Right lobe of liver (tissue), 6 donors: ENCODE measurements at regions of chr11 and their contacts with region 1.

Region 1: DNA sequence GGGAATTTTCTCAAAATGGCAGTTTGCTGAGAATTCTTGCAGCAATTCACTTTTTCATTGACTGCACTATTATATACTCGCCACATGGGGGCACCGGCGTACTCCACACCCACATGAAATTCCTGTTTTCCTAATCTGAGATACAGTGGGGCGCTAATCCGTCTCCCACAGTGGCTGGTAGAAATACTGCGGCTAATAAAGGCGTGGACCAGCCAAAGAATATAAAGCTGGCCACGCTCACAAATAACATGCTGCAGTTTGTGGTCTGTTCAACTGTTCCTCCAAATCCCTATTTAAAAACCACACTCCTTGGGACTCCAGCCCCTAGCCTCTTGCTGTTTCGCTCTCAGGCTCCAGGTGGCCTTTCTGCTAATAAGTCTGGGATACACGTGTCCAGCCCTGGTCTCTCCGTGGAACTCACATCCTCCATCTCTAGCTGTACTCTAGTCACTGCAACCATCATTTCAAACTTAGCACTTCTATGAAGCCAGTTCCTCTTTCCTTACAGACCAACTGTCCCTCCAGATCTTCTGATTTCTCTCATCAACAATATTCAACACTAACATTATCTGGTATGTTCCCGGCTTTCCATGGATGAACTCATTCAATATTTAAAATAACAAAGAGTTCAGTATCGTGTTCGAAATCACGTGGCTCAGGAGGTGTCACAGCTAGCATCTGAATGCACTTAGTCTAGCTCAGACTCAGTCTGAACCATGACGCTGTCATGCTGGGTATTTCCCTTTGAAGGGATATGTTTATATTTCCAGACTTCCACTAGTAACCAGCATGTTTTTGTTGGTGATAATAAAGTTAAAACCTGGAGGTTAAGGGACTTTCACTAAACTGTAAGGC is 22.0 kb downstream of the TBRG1 start:
- DNase-seq: peak in 2 of 3 donors; percentile 37 to 50
- ATAC-seq: peak; percentile 96 to 99 (median 98)
- H3K4me3 ChIP-seq: peak overlapping the region in 1 of 3 donors; percentile 23
- H3K27ac ChIP-seq: no peak overlapping the region
- H3K4me1 ChIP-seq: peaks cover 0 to 4% (median 0%) of the 10 kb centered on the region in 4 donors
- H3K27me3 ChIP-seq: no peaks in the 10 kb centered on the region
- CTCF ChIP-seq: peak; percentile 69 to 83 (median 75)
- POLR2A ChIP-seq: no peak

Region 2: DNA sequence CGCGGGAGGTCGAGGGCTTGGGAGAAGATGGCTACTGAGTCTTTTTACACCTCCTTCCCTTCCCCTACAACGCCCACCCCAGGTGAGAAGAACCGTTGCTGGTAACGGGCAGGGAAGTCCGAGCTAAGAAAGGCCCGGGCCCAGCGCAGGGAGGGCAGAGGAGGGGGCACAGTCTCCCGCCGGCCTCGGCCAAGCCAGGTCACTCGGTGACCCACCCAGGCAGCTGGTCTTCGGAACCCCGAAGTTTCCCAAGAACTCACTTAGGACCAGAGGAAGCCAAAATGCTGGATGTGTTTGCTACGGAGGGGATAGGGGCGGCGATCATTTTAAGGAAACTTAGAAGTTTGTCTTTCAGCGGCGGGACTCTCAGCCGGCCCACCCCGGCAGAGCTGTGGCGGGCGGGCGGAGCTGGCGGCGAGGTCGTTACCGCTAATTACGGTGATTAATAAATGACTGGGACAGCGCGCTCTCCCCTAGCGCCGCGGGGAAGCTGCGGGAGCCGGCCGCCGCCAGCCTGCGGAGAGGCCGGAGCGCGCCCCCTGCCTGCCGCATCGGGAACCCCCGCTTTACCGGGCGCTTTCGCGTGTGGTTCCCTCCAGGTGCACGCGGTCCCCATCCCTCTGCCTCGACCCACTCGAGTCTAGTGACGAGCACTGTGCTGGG is 221.4 kb after region 1 on chr11:
- intact Hi-C with region 1: loop called in 1 of 2 experiments (anchors 10 kb)
- DNase-seq: peak in 1 of 3 donors; percentile 50
- ATAC-seq: peak; percentile 57 to 78 (median 72)
- H3K4me3 ChIP-seq: peak overlapping the region in 1 of 3 donors; percentile 31
- H3K27ac ChIP-seq: no peak overlapping the region
- H3K4me1 ChIP-seq: peaks cover 0 to 25% (median 3%) of the 10 kb centered on the region in 4 donors
- H3K27me3 ChIP-seq: peaks cover 13 to 50% of the 10 kb centered on the region in 2 donors
- CTCF ChIP-seq: peak; percentile 52 to 86 (median 76)
- POLR2A ChIP-seq: no peak

Region 3: DNA sequence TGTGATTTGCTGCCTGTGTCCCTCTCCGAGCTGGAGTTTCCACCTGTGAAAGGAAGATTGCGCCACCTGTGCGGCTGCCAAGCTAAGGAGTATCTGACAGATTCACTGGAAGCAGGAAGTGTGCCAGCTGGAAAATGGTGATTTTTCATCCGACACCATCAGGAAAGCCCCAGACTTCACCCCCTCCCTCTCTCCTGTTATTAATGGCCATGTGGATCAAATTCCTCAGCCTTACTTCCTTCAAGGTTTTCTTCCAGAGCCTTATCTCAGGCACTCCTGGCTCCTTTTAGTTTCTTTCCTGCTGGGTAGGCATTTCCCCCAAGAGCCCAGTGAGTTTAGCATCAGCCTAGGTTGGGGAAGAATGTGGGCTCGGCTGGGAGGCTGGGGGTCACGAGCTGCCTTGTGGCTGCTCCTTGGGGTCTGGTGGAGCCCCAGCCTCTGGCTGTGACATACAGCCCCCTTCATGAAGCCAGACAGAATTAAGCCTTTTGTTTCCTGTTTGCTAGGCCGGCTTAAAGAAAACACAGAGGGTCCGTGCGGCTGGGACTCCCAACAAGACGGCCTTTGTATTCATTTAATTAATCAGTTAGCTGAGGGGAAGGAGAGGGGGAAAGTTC is 557.0 kb after region 1 on chr11:
- intact Hi-C with region 1: no loop called
- DNase-seq: peak; percentile 76 to 78 (median 77)
- ATAC-seq: peak; percentile 37 to 87 (median 62)
- H3K4me3 ChIP-seq: no peak overlapping the region
- H3K27ac ChIP-seq: no peak overlapping the region
- H3K4me1 ChIP-seq: no peaks in the 10 kb centered on the region
- H3K27me3 ChIP-seq: no peaks in the 10 kb centered on the region
- CTCF ChIP-seq: no peak
- POLR2A ChIP-seq: no peak